Gastrocnemius medialis (tissue), 4 donors: ENCODE measurements at regions of chr5 and their contacts with region 1.

Region 1: DNA sequence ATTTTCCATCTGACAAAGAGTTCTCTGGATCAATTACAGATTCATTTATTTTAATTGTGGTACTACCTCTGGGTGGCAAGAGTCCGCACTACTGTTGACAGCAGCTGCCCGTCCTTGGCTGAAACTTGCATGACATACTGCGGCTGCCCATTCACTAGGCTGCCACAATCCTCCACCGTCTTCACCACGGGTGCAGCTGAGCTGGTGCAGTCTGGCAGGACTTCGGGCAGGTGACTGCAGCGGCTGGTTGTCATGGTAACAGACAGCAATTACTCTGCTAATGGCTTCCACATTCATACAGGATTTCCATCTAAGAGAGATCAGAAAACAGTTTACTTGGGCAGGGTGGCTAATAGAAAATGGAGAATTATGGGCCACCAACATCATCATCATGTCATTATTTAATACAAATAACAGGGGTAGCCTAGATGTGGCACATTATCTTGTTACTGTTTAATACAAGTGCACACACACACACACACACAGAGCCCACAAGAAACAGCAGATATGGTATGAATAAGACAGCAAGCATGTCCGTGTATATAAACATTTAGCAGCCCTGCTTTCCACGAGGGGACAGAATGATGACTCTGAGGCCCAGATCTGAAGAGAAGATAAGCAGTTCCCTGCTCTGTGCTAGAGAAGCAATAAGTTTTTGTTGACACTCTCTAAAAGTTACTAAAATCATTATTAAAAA is 112.3 kb downstream of the MARCHF3 start:
- DNase-seq: no peak
- ATAC-seq: no peak
- H3K4me3 ChIP-seq: no peak overlapping the region
- H3K27ac ChIP-seq: no peak overlapping the region
- H3K4me1 ChIP-seq: peaks cover 13 to 16% of the 10 kb centered on the region in 2 donors
- H3K27me3 ChIP-seq: no peaks in the 10 kb centered on the region
- CTCF ChIP-seq: no peak
- POLR2A ChIP-seq: no peak

Region 2: DNA sequence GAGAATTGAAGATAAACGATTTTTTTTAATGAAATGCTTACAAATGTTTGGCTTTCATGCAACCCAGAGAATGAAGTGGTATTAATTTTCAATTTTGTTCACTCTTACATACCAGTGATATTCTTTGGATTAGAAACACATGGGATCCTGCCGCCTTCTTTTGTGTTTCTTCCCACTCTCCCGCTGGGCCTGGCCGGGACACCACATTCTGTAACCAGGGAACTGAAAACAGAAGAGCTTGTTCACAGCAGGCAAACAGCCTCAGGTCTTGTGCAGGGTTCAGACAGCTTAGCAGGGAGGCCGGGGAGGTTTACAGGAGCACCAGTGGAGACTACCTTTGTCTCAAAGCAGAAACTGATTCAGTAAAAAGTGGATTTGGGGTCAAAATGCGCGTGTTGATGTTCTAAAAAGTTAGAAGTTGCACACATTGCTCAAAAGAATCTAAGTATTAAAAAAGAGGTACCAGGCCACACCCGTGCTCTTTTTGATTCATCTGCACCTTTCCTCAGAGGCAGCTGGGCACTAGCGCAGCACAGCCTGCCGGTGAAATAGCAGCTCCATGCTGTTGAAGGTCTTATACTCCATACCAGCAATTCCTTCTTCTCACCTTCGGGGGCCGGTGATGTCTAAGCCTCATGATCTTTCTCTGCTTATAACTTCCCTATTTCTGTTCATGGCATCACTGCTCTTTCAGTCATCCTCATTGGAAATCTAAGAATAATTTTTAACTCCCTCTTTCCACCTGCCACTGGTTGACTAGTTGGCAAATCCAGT is 427.7 kb before region 1 on chr5:
- in situ Hi-C with region 1: no loop called
- intact Hi-C with region 1: no loop called
- DNase-seq: no peak
- ATAC-seq: no peak
- H3K4me3 ChIP-seq: no peak overlapping the region
- H3K27ac ChIP-seq: no peak overlapping the region
- H3K4me1 ChIP-seq: no peaks in the 10 kb centered on the region
- H3K27me3 ChIP-seq: no peaks in the 10 kb centered on the region
- CTCF ChIP-seq: no peak
- POLR2A ChIP-seq: no peak

Region 3: GRCh38 chr5:126869005-126869451 is 49.0 kb before region 1 on chr5:
- in situ Hi-C with region 1: no loop called
- intact Hi-C with region 1: loop called (anchors 1 kb)
- DNase-seq: no peak
- ATAC-seq: no peak
- H3K4me3 ChIP-seq: peak overlapping the region in 1 of 4 donors; percentile 21
- H3K27ac ChIP-seq: no peak overlapping the region
- H3K4me1 ChIP-seq: peaks cover 4 to 8% of the 10 kb centered on the region in 2 donors
- H3K27me3 ChIP-seq: no peaks in the 10 kb centered on the region
- CTCF ChIP-seq: no peak
- POLR2A ChIP-seq: no peak